RWPE1 (cell line): ENCODE measurements at regions of chr1 and their contacts with region 1.

Region 1: GRCh38 chr1:154760469-154760933 is 109.6 kb downstream of the KCNN3 start:
- DNase-seq: peak; percentile 68
- H3K27ac ChIP-seq: no peak overlapping the region
- CTCF ChIP-seq: peak; percentile 67

Region 2: GRCh38 chr1:153805042-153805745 is 955.3 kb before region 1 on chr1:
- CTCF ChIA-PET with region 1: no interaction called
- POLR2A ChIA-PET with region 1: no interaction called
- DNase-seq: peak; percentile 55
- H3K27ac ChIP-seq: peak overlapping the region; percentile 67
- CTCF ChIP-seq: no peak

Region 3: DNA sequence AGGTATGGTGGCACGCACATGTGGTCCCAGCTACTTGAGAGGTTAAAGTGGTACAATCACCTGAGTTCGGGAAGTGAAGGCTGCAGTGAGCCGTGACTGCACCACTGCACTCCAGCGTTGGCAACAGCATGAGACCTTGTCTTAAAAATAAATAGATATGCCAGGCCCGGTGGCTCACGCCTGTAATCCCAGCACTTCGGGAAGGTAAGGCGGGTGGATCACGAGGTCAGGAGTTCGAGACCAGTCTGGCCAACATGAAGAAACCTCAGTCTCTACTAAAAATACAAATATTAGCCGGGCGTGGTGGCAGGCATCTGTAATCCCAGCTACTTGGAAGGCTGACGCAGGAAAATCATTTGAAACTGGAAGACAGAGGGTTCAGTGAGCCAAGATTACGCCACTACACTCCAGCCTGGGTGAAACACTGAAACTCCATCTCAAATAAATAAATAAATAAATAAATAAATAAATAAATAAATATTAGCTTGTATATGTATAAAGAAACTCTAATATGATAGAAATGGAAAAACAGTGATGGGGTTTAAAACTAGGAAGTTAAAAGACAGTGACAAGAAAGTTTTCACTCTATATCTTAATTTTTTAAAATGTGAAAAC is 856.6 kb before region 1 on chr1:
- CTCF ChIA-PET with region 1: no interaction called
- POLR2A ChIA-PET with region 1: no interaction called
- DNase-seq: no peak
- H3K27ac ChIP-seq: peak overlapping the region; percentile 49
- CTCF ChIP-seq: no peak

Region 4: DNA sequence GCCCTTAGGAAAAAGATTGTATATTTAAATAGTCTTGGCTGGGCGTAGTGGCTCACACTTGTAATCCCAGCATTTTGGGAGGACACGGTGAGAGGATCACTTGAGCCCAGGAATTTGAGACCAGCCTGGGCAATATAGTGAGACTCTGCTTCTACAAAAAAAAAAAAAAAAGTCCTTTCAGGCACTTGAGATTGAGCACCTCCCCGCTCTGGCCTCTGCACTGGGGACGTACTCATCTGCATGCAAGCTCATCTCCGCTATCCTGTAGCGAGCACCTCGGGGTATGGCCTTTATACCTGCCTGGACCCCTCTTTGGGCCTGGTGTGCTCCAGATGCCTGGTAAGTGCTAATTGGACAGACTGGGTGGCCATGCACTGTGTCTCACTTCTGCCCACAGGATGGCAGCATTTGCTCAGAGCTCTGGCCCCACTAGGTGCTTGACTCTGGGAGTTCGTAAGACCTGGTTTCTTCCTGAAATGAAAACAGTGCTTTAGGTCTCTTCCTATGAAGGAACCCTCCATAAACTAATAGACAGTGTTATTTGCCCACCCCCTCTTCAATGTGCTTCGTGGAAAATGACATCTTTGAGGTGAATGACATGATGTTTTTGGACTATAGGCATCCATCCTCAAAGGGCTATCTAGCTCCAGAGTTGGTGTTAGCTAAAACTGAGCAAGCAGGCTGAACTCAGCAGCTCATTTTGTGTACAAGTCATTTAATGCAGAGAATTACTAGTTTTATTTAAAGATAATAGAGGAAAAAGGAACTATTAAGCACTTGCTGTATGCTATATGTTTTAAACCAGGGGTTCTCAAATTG is 90.8 kb before region 1 on chr1:
- CTCF ChIA-PET with region 1: interaction called, 11 read pairs
- POLR2A ChIA-PET with region 1: no interaction called
- DNase-seq: peak; percentile 83
- H3K27ac ChIP-seq: no peak overlapping the region
- CTCF ChIP-seq: peak; percentile 82

Region 5: GRCh38 chr1:154772606-154773506 is 12.4 kb after region 1 on chr1:
- CTCF ChIA-PET with region 1: no interaction called
- POLR2A ChIA-PET with region 1: no interaction called
- DNase-seq: no peak
- H3K27ac ChIP-seq: no peak overlapping the region
- CTCF ChIP-seq: no peak